Cardiac septum (tissue), 1 donor: ENCODE measurements at regions of chr1 and their contacts with region 1.

Region 1: GRCh38 chr1:109687616-109688499 is at the start of gene GSTM1:
- DNase-seq: peak; percentile 96
- total RNA-seq, gene GSTM1: 44.1 TPM

Region 2: GRCh38 chr1:109643385-109644230 is 44.2 kb before region 1 on chr1:
- intact Hi-C with region 1: loop called (anchors 5 kb)
- DNase-seq: peak; percentile 93